Activated CD8-positive, alpha-beta T cell treated with anti-CD3 and anti-CD28 coated beads for 36 hours (primary cell): ENCODE measurements at regions of chr18 and their contacts with region 1.

Region 1: DNA sequence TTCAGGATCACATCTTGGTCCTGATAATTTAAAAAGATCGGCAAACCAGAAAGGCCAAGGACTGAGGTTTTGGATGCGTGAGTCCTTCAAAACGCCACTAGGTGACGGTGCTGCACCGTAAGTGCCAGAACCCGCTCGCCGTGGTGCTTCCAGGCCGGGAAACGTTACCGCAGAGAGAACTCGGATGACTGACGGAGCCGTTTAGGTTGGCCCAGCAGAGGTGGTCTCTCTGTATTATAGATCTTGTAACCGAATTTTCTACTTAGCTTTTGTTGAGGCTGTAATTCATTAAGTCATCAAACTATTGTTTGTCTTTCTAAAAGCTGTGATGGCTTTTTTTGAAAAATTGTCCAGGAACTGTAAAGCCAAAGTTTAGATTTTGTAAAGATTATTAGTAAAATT is 39.8 kb upstream of the ADCYAP1 start:
- DNase-seq: peak; percentile 76
- ATAC-seq: peak; percentile 82
- H3K4me3 Mint-ChIP-seq: no peak overlapping the region
- H3K27ac Mint-ChIP-seq: no peak overlapping the region
- H3K4me1 Mint-ChIP-seq: peaks cover 3% of the 10 kb centered on the region
- H3K27me3 Mint-ChIP-seq: peaks cover 15% of the 10 kb centered on the region
- CTCF ChIP-seq: peak; percentile 97

Region 2: GRCh38 chr18:877238-877637 is 12.4 kb after region 1 on chr18:
- CTCF ChIA-PET with region 1: interaction called, 10 read pairs
- POLR2A ChIA-PET with region 1: no interaction called
- intact Hi-C with region 1: no loop called
- DNase-seq: no peak
- ATAC-seq: no peak
- H3K4me3 Mint-ChIP-seq: no peak overlapping the region
- H3K27ac Mint-ChIP-seq: no peak overlapping the region
- H3K4me1 Mint-ChIP-seq: peaks cover 10% of the 10 kb centered on the region
- H3K27me3 Mint-ChIP-seq: no peaks in the 10 kb centered on the region
- CTCF ChIP-seq: no peak

Region 3: DNA sequence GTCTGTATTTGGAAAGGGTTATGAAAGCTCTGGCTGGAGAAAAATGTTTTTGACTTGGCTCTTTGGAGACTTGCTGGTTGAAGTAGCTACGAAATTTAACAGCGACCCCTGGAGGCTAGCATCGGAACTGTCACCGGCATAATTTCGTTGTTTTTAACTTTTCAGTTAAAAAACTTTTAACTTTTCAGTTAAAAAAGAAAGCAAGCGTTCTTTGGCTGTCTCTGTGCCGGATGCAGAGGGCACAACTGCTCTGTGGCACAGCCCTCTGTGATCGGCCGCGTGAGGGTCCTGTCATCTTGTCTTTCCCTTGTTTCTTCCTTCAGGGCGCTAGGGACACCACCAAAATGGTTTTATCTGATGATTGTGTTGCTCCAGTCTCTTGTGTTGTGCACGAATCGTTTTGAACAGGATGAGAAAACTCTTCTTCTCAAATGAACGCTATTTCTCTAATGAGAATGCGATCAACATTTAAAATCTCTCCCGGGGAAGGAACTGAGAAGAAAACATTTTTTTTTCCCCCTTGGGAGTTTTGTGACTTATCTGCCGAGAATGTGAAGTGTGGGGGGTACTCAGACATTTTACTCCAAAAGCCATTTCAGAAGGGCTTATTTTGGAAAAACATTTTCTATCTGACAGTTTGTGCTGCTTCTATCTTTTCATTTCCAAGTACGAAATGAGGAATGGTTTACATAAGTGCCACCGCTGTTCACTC is 96.9 kb after region 1 on chr18:
- CTCF ChIA-PET with region 1: interaction called, 24 read pairs
- POLR2A ChIA-PET with region 1: no interaction called
- intact Hi-C with region 1: loop called (anchors 2 kb)
- DNase-seq: peak; percentile 68
- ATAC-seq: no peak
- H3K4me3 Mint-ChIP-seq: no peak overlapping the region
- H3K27ac Mint-ChIP-seq: no peak overlapping the region
- H3K4me1 Mint-ChIP-seq: peaks cover 3% of the 10 kb centered on the region
- H3K27me3 Mint-ChIP-seq: peaks cover 6% of the 10 kb centered on the region
- CTCF ChIP-seq: peak; percentile 98